OCI-LY7 (cell line): ENCODE measurements at regions of chr1 and their contacts with region 1.

Region 1: DNA sequence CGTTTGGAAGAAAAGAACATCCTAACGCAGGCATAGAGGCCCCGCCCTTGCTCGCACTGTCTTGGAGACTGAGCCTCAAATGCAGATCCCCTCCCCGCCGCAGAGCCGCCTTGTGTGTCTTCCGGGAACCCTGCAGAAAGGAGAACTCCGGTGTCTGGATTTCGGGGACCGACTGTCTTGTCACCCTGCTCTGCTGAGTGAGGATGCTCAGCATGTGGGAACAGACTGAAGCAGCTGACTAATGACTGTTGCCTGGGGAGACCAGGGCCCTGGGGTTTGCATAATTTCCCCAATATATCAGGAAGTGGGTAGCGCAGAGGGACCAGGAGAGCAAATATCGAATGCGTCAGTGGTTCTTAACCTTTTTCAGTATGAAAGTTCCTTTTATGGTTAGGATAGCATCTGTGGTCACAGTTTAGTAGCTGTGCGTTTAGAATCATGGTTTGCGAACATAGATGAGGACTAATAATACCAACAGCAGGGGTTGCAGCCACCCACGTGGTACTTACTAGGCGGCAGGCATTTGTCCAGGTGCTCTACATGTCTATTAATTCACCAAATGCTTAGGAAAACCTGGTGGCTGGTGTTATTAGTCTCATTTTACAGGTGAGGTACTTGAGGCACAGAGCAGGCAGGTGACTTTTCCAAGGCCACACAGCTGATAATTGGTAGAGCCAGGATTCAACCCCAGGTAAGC is 14.3 kb downstream of the GPR137B start:
- DNase-seq: peak; percentile 86
- H3K4me3 ChIP-seq: peak overlapping the region; percentile 40
- H3K27ac ChIP-seq: peak overlapping the region; percentile 68
- H3K4me1 ChIP-seq: peaks cover 56% of the 10 kb centered on the region
- CTCF ChIP-seq: no peak

Region 2: DNA sequence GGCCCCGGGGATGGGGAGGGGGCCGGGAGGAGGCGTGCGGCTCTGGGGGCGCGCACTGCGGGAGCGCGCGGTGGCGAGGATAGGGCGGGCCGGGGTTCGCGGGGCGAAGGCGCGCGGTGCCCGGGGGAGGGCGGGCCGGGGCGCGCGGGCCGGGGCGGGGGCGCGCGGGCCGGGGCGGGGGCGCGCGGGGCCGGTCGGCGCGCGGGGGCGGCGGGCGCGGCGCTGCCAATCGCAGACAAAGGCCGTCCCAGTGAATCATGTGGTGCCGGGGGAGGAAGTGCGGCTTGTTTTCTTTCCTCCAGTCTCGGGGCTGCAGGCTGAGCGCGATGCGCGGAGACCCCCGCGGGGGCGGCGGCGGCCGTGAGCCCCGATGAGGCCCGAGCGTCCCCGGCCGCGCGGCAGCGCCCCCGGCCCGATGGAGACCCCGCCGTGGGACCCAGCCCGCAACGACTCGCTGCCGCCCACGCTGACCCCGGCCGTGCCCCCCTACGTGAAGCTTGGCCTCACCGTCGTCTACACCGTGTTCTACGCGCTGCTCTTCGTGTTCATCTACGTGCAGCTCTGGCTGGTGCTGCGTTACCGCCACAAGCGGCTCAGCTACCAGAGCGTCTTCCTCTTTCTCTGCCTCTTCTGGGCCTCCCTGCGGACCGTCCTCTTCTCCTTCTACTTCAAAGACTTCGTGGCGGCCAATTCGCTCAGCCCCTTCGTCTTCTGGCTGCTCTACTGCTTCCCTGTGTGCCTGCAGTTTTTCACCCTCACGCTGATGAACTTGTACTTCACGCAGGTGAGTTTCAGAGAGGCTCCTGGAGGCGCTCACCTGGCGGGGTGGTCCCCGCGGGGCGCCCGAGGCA is 14.2 kb before region 1 on chr1 and contains the start of gene GPR137B:
- CTCF ChIA-PET with region 1: interaction called, 6 read pairs
- POLR2A ChIA-PET with region 1: interaction called, 12 read pairs
- intact Hi-C with region 1: loop called (anchors 1 kb)
- DNase-seq: peak; percentile 63
- H3K4me3 ChIP-seq: peak within 1 kb of the TSS; percentile 70
- H3K27ac ChIP-seq: no peak within 1 kb of the TSS
- H3K4me1 ChIP-seq: peaks cover 10% of the 10 kb centered on the region
- CTCF ChIP-seq: no peak
- total RNA-seq, gene GPR137B: 1.2 and 2.8 TPM in 2 replicates

Region 3: DNA sequence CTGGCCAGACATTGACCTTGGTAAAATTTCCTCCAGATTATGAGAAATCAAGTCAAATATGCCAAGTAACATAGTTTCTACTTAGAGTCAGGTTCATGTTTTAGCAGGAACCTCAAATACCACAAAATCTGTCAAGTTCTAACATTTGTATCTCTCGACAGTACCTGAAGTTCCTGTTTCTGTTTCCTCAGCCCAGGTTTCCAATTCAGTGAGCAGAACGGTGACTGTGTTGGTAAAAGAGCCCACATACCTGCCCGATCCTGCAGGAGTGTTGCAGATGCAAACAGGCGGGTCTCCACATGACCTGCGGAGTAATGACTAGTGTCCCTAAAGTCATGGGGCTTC is 309.3 kb after region 1 on chr1:
- CTCF ChIA-PET with region 1: no interaction called
- POLR2A ChIA-PET with region 1: no interaction called
- intact Hi-C with region 1: no loop called
- DNase-seq: peak; percentile 6
- H3K4me3 ChIP-seq: no peak overlapping the region
- H3K27ac ChIP-seq: no peak overlapping the region
- H3K4me1 ChIP-seq: peaks cover 4% of the 10 kb centered on the region
- CTCF ChIP-seq: no peak